B cell (primary cell): ENCODE measurements at regions of chr2 and their contacts with region 1.

Region 1: GRCh38 chr2:197071213-197071612 is 144.7 kb upstream of the PGAP1 start:
- DNase-seq: no peak
- ATAC-seq: no peak
- H3K4me3 ChIP-seq: no peak overlapping the region
- H3K4me3 Mint-ChIP-seq: no peak overlapping the region
- H3K27ac ChIP-seq: peak overlapping the region in 1 of 2 donors; percentile 56
- H3K27ac Mint-ChIP-seq: no peak overlapping the region
- H3K4me1 ChIP-seq: no peaks in the 10 kb centered on the region
- H3K4me1 Mint-ChIP-seq: peaks cover 13% of the 10 kb centered on the region
- H3K27me3 ChIP-seq: no peaks in the 10 kb centered on the region
- H3K27me3 Mint-ChIP-seq: no peaks in the 10 kb centered on the region
- CTCF ChIP-seq: no peak

Region 2: GRCh38 chr2:195813421-195813820 is 1257.8 kb before region 1 on chr2:
- CTCF ChIA-PET with region 1: no interaction called
- POLR2A ChIA-PET with region 1: no interaction called
- intact Hi-C with region 1: no loop called
- DNase-seq: no peak
- ATAC-seq: no peak
- H3K4me3 ChIP-seq: no peak overlapping the region
- H3K4me3 Mint-ChIP-seq: no peak overlapping the region
- H3K27ac ChIP-seq: no peak overlapping the region
- H3K27ac Mint-ChIP-seq: no peak overlapping the region
- H3K4me1 ChIP-seq: no peaks in the 10 kb centered on the region
- H3K4me1 Mint-ChIP-seq: no peaks in the 10 kb centered on the region
- H3K27me3 ChIP-seq: no peaks in the 10 kb centered on the region
- H3K27me3 Mint-ChIP-seq: no peaks in the 10 kb centered on the region
- CTCF ChIP-seq: no peak

Region 3: GRCh38 chr2:197011799-197012641 is 59.2 kb before region 1 on chr2:
- CTCF ChIA-PET with region 1: no interaction called
- POLR2A ChIA-PET with region 1: no interaction called
- intact Hi-C with region 1: no loop called
- DNase-seq: peak; percentile 55
- ATAC-seq: peak; percentile 54
- H3K4me3 ChIP-seq: no peak overlapping the region
- H3K4me3 Mint-ChIP-seq: no peak overlapping the region
- H3K27ac ChIP-seq: peak overlapping the region in 1 of 2 donors; percentile 51
- H3K27ac Mint-ChIP-seq: peak overlapping the region; percentile 50
- H3K4me1 ChIP-seq: no peaks in the 10 kb centered on the region
- H3K4me1 Mint-ChIP-seq: no peaks in the 10 kb centered on the region
- H3K27me3 ChIP-seq: no peaks in the 10 kb centered on the region
- H3K27me3 Mint-ChIP-seq: no peaks in the 10 kb centered on the region
- CTCF ChIP-seq: peak; percentile 83

Region 4: GRCh38 chr2:197042739-197043196 is 28.4 kb before region 1 on chr2:
- CTCF ChIA-PET with region 1: no interaction called
- POLR2A ChIA-PET with region 1: no interaction called
- intact Hi-C with region 1: no loop called
- DNase-seq: no peak
- ATAC-seq: no peak
- H3K4me3 ChIP-seq: no peak overlapping the region
- H3K4me3 Mint-ChIP-seq: no peak overlapping the region
- H3K27ac ChIP-seq: no peak overlapping the region
- H3K27ac Mint-ChIP-seq: no peak overlapping the region
- H3K4me1 ChIP-seq: no peaks in the 10 kb centered on the region
- H3K4me1 Mint-ChIP-seq: peaks cover 7% of the 10 kb centered on the region
- H3K27me3 ChIP-seq: no peaks in the 10 kb centered on the region
- H3K27me3 Mint-ChIP-seq: no peaks in the 10 kb centered on the region
- CTCF ChIP-seq: no peak

Region 5: GRCh38 chr2:197057959-197058358 is 13.3 kb before region 1 on chr2:
- CTCF ChIA-PET with region 1: no interaction called
- POLR2A ChIA-PET with region 1: no interaction called
- intact Hi-C with region 1: loop called (anchors 2 kb)
- DNase-seq: no peak
- ATAC-seq: no peak
- H3K4me3 ChIP-seq: no peak overlapping the region
- H3K4me3 Mint-ChIP-seq: no peak overlapping the region
- H3K27ac ChIP-seq: no peak overlapping the region
- H3K27ac Mint-ChIP-seq: peak overlapping the region; percentile 20
- H3K4me1 ChIP-seq: no peaks in the 10 kb centered on the region
- H3K4me1 Mint-ChIP-seq: peaks cover 3% of the 10 kb centered on the region
- H3K27me3 ChIP-seq: no peaks in the 10 kb centered on the region
- H3K27me3 Mint-ChIP-seq: no peaks in the 10 kb centered on the region
- CTCF ChIP-seq: no peak